H1 (cell line): ENCODE measurements at regions of chr14 and their contacts with region 1.

Region 1: GRCh38 chr14:99595034-99595433 is 9.0 kb downstream of the CCDC85C start:
- DNase-seq: no peak
- H3K4me3 ChIP-seq: no peak overlapping the region
- H3K27ac ChIP-seq: no peak overlapping the region
- H3K4me1 ChIP-seq: peaks cover 0 to 26% (median 18%) of the 10 kb centered on the region in 4 experiments; a peak in 6 of 7 replicates
- H3K27me3 ChIP-seq: no peaks in the 10 kb centered on the region; a peak in 1 of 7 replicates
- CTCF ChIP-seq: no peak
- EP300 ChIP-seq: no peak
- POLR2A ChIP-seq: no peak
- RAD21 ChIP-seq: no peak

Region 2: DNA sequence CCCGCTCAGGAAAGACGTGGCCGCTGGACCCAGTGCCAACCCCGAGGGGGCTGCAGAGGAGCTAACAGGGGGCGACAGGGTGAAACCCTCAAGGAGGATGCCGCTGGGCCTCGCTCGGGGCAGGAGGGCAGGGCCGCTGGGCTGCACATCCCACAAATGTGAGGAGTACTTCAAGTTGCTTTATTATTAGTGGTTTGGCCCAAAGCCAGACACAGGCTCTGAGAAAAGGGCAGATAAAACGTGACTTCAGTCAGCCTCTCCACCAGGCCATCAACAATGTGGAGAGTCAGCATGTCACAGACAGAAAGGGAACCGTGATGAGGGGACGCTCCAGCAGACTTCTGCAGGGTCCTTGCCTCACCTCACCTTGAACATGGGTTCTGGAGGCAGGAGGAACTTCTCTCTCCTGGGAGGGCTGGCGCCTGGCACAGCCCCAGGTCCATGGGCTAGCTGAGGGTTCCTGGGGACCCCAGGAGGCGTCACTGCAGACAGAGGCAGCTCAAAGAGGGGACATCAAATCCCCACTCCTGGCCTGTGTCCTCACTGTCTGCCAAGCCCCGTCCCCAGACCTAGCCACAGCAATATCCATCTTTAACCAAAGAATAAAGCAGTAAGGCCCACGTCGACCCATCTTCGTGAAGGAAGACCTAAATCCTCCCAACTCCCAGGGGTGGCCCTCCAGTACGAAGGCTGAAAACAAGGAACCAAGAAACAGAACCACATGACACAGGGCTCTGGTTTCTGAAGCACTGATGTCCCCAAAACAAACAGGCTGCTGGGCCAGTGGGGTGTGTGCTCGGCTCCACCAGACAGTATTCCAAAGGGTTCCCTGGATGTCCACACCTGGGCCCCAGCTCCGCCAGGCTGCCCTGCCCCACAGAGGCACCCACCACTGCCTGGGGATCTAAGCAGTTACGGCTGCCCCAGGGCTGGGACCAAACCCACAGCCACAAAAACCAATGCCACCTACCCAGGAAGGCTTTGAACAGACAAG is 26.2 kb before region 1 on chr14:
- CTCF ChIA-PET with region 1: interaction called, 35 read pairs
- POLR2A ChIA-PET with region 1: interaction called, 3 read pairs
- DNase-seq: no peak
- H3K4me3 ChIP-seq: no peak overlapping the region
- H3K27ac ChIP-seq: no peak overlapping the region
- H3K4me1 ChIP-seq: peaks cover 28 to 78% (median 54%) of the 10 kb centered on the region in 4 experiments
- H3K27me3 ChIP-seq: peaks cover 0 to 3% (median 0%) of the 10 kb centered on the region in 4 experiments; a peak in 2 of 7 replicates
- CTCF ChIP-seq: no peak
- EP300 ChIP-seq: no peak
- POLR2A ChIP-seq: no peak
- RAD21 ChIP-seq: no peak

Region 3: GRCh38 chr14:99581374-99581773 is 13.7 kb before region 1 on chr14:
- CTCF ChIA-PET with region 1: interaction called, 35 read pairs
- POLR2A ChIA-PET with region 1: no interaction called
- DNase-seq: no peak
- H3K4me3 ChIP-seq: no peak overlapping the region
- H3K27ac ChIP-seq: no peak overlapping the region
- H3K4me1 ChIP-seq: peaks cover 0 to 31% (median 18%) of the 10 kb centered on the region in 4 experiments; a peak in 6 of 7 replicates
- H3K27me3 ChIP-seq: no peaks in the 10 kb centered on the region
- CTCF ChIP-seq: no peak
- EP300 ChIP-seq: no peak
- POLR2A ChIP-seq: no peak
- RAD21 ChIP-seq: no peak